IMR-90 (cell line): ENCODE measurements at regions of chr7 and their contacts with region 1.

Region 1: DNA sequence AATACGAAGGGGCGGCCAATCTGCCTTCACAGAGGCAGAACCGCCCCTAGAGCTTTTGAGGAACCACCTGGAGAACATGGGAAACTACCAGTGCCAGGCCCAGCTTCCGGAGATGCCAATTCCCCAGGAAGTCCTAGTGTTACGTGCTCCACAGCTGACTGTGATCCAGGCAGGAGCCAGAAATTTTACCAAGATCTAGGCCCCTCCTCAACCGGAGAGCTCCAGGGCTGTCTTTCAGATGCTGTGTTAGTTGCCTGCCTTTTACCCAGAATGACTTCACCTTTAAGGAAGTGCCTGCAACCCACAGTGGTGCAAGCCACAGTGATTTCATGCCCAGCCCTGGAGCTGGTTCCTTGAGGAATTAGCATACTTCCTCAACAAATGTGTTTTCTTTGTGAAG is 62.9 kb downstream of the ELMO1 start:
- DNase-seq: no peak
- ATAC-seq: no peak
- H3K4me3 ChIP-seq: no peak overlapping the region
- H3K27ac ChIP-seq: no peak overlapping the region
- H3K4me1 ChIP-seq: no peaks in the 10 kb centered on the region
- H3K27me3 ChIP-seq: no peaks in the 10 kb centered on the region
- CTCF ChIP-seq: no peak
- POLR2A ChIP-seq: no peak
- RAD21 ChIP-seq: no peak

Region 2: GRCh38 chr7:37448636-37449361 is 63.0 kb after region 1 on chr7 and contains the start of gene ELMO1:
- CTCF ChIA-PET with region 1: no interaction called
- POLR2A ChIA-PET with region 1: no interaction called
- dilution Hi-C with region 1: no loop called
- in situ Hi-C with region 1: no loop called
- intact Hi-C with region 1: loop called (anchors 10 kb)
- DNase-seq: peak; percentile 6
- ATAC-seq: peak; percentile 62
- H3K4me3 ChIP-seq: no peak within 1 kb of the TSS; the same call in 1 of the 2 replicates
- H3K27ac ChIP-seq: no peak within 1 kb of the TSS
- H3K4me1 ChIP-seq: no peaks in the 10 kb centered on the region
- H3K27me3 ChIP-seq: peaks cover 4% of the 10 kb centered on the region; the same call in 1 of the 2 replicates
- CTCF ChIP-seq: no peak; the same call in 1 of the 2 replicates
- POLR2A ChIP-seq: no peak
- RAD21 ChIP-seq: no peak
- total RNA-seq, gene ELMO1: not detected in 2 replicates

Region 3: GRCh38 chr7:38413784-38414183 is 1028.0 kb after region 1 on chr7:
- CTCF ChIA-PET with region 1: no interaction called
- POLR2A ChIA-PET with region 1: no interaction called
- dilution Hi-C with region 1: no loop called
- in situ Hi-C with region 1: no loop called
- intact Hi-C with region 1: no loop called
- DNase-seq: no peak
- ATAC-seq: no peak
- H3K4me3 ChIP-seq: no peak overlapping the region
- H3K27ac ChIP-seq: no peak overlapping the region
- H3K4me1 ChIP-seq: no peaks in the 10 kb centered on the region
- H3K27me3 ChIP-seq: no peaks in the 10 kb centered on the region
- CTCF ChIP-seq: no peak
- POLR2A ChIP-seq: no peak
- RAD21 ChIP-seq: no peak